Naive thymus-derived CD4-positive, alpha-beta T cell (primary cell): ENCODE measurements at regions of chr6 and their contacts with region 1.

Region 1: GRCh38 chr6:139291813-139292619 is at the start of gene TXLNB:
- DNase-seq: peak; percentile 32 to 94 (median 87)
- ATAC-seq: peak; percentile 92
- H3K4me3 ChIP-seq: peak within 1 kb of the TSS; percentile 42
- H3K4me3 Mint-ChIP-seq: peak within 1 kb of the TSS; percentile 80 to 92 (median 90)
- H3K27ac ChIP-seq: peak within 1 kb of the TSS; percentile 75
- H3K27ac Mint-ChIP-seq: peak within 1 kb of the TSS; percentile 93 to 99 (median 98)
- H3K4me1 ChIP-seq: peaks cover 33 to 39% of the 10 kb centered on the region in 2 donors
- H3K4me1 Mint-ChIP-seq: peaks cover 36 to 87% (median 81%) of the 10 kb centered on the region in 7 donors
- H3K27me3 ChIP-seq: no peaks in the 10 kb centered on the region
- H3K27me3 Mint-ChIP-seq: no peaks in the 10 kb centered on the region
- total RNA-seq, gene TXLNB: 0.29 to 1.1 (median 0.66) TPM

Region 2: GRCh38 chr6:138785079-138785478 is 506.9 kb before region 1 on chr6:
- CTCF ChIA-PET with region 1: no interaction called
- POLR2A ChIA-PET with region 1: no interaction called
- intact Hi-C with region 1: no loop called
- DNase-seq: no peak
- ATAC-seq: no peak
- H3K4me3 ChIP-seq: no peak overlapping the region
- H3K4me3 Mint-ChIP-seq: no peak overlapping the region
- H3K27ac ChIP-seq: no peak overlapping the region
- H3K27ac Mint-ChIP-seq: no peak overlapping the region
- H3K4me1 ChIP-seq: no peaks in the 10 kb centered on the region
- H3K4me1 Mint-ChIP-seq: peaks cover 5 to 12% (median 6%) of the 10 kb centered on the region in 7 donors
- H3K27me3 ChIP-seq: no peaks in the 10 kb centered on the region
- H3K27me3 Mint-ChIP-seq: no peaks in the 10 kb centered on the region

Region 3: DNA sequence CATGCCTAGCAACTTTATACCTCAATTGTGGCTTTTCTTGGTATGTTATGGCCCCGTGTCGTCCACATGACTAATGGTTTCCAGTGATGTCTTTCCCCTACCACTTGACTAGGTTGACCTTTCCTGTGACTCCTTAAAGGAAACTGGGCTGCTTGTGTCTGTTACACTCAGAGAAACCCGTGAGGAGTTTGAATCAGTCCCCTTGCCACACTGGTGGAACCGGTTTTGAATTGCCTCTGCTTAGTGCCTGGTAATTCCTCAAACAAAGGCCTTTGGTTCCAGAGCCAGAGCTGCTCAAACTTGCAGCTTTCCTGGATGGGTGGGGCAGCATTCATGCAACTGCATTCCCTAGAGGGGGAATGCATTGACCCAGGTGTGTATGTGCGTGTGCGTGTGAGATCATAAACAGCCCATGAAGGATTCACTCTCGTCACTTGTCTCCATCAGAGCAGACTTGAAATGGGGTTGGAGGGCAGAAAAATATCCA is 474.2 kb before region 1 on chr6:
- CTCF ChIA-PET with region 1: no interaction called
- POLR2A ChIA-PET with region 1: no interaction called
- intact Hi-C with region 1: loop called in 1 of 2 experiments (anchors 1 kb)
- DNase-seq: peak in 1 of 9 donors; percentile 28
- ATAC-seq: no peak
- H3K4me3 ChIP-seq: no peak overlapping the region
- H3K4me3 Mint-ChIP-seq: no peak overlapping the region
- H3K27ac ChIP-seq: no peak overlapping the region
- H3K27ac Mint-ChIP-seq: peak overlapping the region in 1 of 9 donors; percentile 21
- H3K4me1 ChIP-seq: no peaks in the 10 kb centered on the region
- H3K4me1 Mint-ChIP-seq: peaks cover 0 to 30% (median 0%) of the 10 kb centered on the region in 7 donors
- H3K27me3 ChIP-seq: no peaks in the 10 kb centered on the region
- H3K27me3 Mint-ChIP-seq: no peaks in the 10 kb centered on the region

Region 4: DNA sequence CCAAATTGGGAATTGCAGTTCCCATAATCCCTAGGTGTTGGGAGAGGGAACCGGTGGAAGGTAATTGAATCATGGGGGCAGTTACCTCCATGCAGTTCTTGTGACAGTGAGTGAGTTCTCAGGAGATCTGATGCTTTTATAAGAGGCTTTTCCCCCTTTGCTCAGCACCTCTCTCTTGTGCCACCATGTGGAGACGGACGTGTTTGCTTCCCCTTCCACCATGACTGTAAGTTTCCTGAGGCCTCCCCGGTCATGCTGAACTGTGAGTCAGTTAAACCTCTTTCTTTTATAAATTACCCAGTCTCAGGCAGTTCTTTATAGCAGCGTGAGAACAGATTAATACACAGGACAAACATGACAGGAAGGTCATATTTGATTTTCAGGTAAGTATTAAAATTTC is 182.5 kb before region 1 on chr6:
- CTCF ChIA-PET with region 1: no interaction called
- POLR2A ChIA-PET with region 1: interaction called, 4 read pairs
- intact Hi-C with region 1: loop called (anchors 5 kb)
- DNase-seq: peak in 2 of 9 donors; percentile 21 to 28
- ATAC-seq: no peak
- H3K4me3 ChIP-seq: no peak overlapping the region
- H3K4me3 Mint-ChIP-seq: peak overlapping the region in 2 of 10 donors; percentile 6 to 36
- H3K27ac ChIP-seq: no peak overlapping the region
- H3K27ac Mint-ChIP-seq: peak overlapping the region in 8 of 9 donors; percentile 38 to 94 (median 86)
- H3K4me1 ChIP-seq: peaks cover 36 to 48% of the 10 kb centered on the region in 2 donors
- H3K4me1 Mint-ChIP-seq: peaks cover 17 to 74% (median 59%) of the 10 kb centered on the region in 7 donors
- H3K27me3 ChIP-seq: no peaks in the 10 kb centered on the region
- H3K27me3 Mint-ChIP-seq: no peaks in the 10 kb centered on the region

Region 5: DNA sequence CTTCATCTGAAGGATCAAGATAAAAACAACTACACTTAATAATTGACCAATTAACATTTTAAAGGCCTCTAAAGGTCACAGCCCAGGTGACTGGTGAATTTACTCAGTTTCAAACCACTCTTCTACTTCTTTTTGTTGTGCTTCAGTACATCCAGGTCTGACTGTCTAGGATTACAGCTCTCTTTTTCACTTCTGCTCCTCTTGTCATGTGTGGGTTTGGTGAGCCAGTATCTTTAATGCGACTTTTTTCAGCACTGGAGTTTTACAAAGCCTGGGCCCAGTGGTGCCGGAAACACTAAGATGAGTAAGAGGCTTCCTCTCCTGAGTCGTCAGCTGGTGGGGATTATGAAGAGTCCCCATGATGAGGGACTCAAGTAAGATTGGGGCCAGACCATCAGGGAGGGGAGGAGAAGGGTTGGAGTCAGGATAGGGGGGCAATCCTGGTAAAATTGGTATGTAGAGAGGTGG is 130.2 kb before region 1 on chr6:
- CTCF ChIA-PET with region 1: no interaction called
- POLR2A ChIA-PET with region 1: interaction called, 16 read pairs
- intact Hi-C with region 1: loop called (anchors 1 kb)
- DNase-seq: peak in 8 of 9 donors; percentile 59 to 78 (median 73)
- ATAC-seq: peak; percentile 64
- H3K4me3 ChIP-seq: peak overlapping the region; percentile 11
- H3K4me3 Mint-ChIP-seq: peak overlapping the region; percentile 79 to 88 (median 83)
- H3K27ac ChIP-seq: peak overlapping the region; percentile 75
- H3K27ac Mint-ChIP-seq: peak overlapping the region; percentile 86 to 98 (median 91)
- H3K4me1 ChIP-seq: peaks cover 81 to 85% of the 10 kb centered on the region in 2 donors
- H3K4me1 Mint-ChIP-seq: peaks cover 70 to 96% (median 86%) of the 10 kb centered on the region in 7 donors
- H3K27me3 ChIP-seq: no peaks in the 10 kb centered on the region
- H3K27me3 Mint-ChIP-seq: no peaks in the 10 kb centered on the region

Region 6: DNA sequence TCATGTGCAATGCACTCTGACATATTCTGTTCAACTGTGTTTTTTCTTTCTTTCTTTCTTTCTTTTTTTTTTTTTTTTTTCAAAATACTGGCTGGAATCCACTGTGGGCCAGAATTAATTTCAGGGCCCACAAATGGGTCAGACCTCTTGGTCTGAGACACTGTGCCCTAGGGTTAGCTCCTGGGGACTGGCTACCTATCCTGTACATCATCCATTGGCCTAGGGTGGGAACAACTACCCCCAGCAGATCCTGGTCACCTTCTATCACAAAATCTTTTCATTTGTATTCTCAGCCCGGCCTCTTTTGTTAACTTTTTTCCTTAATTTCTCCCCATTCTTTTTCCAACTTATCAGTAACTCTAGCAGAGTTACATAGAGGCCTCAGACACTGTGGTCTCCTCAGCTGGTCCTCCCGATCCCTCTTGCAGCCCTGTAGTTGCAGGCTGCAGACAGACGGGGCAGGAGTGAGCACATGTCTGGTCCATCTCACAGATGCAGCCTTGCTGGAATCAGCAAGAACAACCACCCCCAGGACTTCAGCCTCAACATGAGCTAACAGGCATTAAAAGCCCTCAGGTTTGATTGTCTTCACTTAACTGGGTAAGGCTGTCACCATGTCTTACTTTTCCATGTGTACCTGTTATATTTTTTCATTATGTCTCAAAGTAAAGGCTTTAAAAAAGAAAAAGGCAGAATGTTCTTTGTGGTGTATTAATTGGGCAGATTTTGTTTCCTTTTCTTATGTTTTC is 41.5 kb before region 1 on chr6:
- CTCF ChIA-PET with region 1: interaction called, 3 read pairs
- POLR2A ChIA-PET with region 1: interaction called, 10 read pairs
- intact Hi-C with region 1: loop called (anchors 1 kb)
- DNase-seq: peak; percentile 7 to 45 (median 34)
- ATAC-seq: peak; percentile 90
- H3K4me3 ChIP-seq: no peak overlapping the region
- H3K4me3 Mint-ChIP-seq: peak overlapping the region in 6 of 10 donors; percentile 16 to 85 (median 58)
- H3K27ac ChIP-seq: no peak overlapping the region
- H3K27ac Mint-ChIP-seq: peak overlapping the region; percentile 32 to 97 (median 73)
- H3K4me1 ChIP-seq: peaks cover 21 to 23% of the 10 kb centered on the region in 2 donors
- H3K4me1 Mint-ChIP-seq: peaks cover 23 to 48% (median 46%) of the 10 kb centered on the region in 7 donors
- H3K27me3 ChIP-seq: no peaks in the 10 kb centered on the region
- H3K27me3 Mint-ChIP-seq: no peaks in the 10 kb centered on the region

Region 7: DNA sequence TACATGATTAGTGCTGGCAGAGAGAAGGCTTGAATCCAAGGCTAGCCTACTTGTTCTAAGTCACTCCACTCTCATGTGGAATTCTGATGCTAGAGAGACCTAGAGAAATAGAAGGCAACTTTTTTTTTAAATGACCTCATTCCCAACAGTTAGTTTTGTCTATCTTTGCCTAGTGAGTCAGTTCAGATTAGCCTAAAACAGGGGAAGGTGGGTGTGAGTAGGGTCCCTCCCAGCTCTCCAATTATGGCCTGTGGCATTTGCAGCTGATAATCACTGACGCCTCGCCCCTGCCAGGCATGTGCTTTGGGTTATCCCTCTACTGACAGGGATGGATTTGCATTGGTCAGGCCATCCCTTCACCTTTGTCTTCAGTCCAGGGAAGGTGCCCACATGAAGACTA is 13.8 kb before region 1 on chr6:
- CTCF ChIA-PET with region 1: interaction called, 3 read pairs
- POLR2A ChIA-PET with region 1: interaction called, 7 read pairs
- intact Hi-C with region 1: loop called (anchors 1 kb)
- DNase-seq: no peak
- ATAC-seq: no peak
- H3K4me3 ChIP-seq: no peak overlapping the region
- H3K4me3 Mint-ChIP-seq: no peak overlapping the region
- H3K27ac ChIP-seq: no peak overlapping the region
- H3K27ac Mint-ChIP-seq: peak overlapping the region in 6 of 9 donors; percentile 12 to 80 (median 58)
- H3K4me1 ChIP-seq: peaks cover 5 to 10% of the 10 kb centered on the region in 2 donors
- H3K4me1 Mint-ChIP-seq: peaks cover 11 to 53% (median 32%) of the 10 kb centered on the region in 7 donors
- H3K27me3 ChIP-seq: no peaks in the 10 kb centered on the region
- H3K27me3 Mint-ChIP-seq: no peaks in the 10 kb centered on the region

Region 8: GRCh38 chr6:139364302-139364981 is 72.4 kb after region 1 on chr6:
- CTCF ChIA-PET with region 1: interaction called, 31 read pairs
- POLR2A ChIA-PET with region 1: interaction called, 12 read pairs
- intact Hi-C with region 1: loop called (anchors 1 kb)
- DNase-seq: peak in 6 of 9 donors; percentile 50 to 74 (median 64)
- ATAC-seq: peak; percentile 81
- H3K4me3 ChIP-seq: no peak overlapping the region
- H3K4me3 Mint-ChIP-seq: peak overlapping the region in 2 of 10 donors; percentile 22 to 34
- H3K27ac ChIP-seq: no peak overlapping the region
- H3K27ac Mint-ChIP-seq: peak overlapping the region; percentile 16 to 88 (median 37)
- H3K4me1 ChIP-seq: peaks cover 0 to 18% of the 10 kb centered on the region in 2 donors
- H3K4me1 Mint-ChIP-seq: peaks cover 17 to 67% (median 53%) of the 10 kb centered on the region in 7 donors
- H3K27me3 ChIP-seq: no peaks in the 10 kb centered on the region
- H3K27me3 Mint-ChIP-seq: peaks cover 0 to 2% (median 0%) of the 10 kb centered on the region in 5 donors

Region 9: DNA sequence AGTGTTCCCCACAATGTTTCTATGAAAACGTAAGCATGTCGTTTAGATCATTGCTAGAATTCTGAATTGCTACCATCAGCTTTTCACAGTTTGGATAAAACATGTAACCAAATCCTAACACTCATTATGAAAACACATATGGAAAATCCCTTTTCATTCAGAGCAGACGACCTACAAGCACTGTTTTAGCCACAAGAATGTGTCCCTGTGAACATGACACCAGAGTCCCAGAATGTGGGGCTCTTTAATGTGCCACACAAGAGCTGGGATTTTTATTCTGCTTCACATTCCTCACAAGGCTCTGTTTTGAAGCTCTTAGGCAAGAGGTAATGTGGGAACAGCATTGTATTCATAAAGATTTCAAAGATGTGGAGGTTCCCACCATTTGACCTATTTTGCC is 223.5 kb after region 1 on chr6:
- CTCF ChIA-PET with region 1: no interaction called
- POLR2A ChIA-PET with region 1: no interaction called
- intact Hi-C with region 1: no loop called
- DNase-seq: no peak
- ATAC-seq: no peak
- H3K4me3 ChIP-seq: no peak overlapping the region
- H3K4me3 Mint-ChIP-seq: no peak overlapping the region
- H3K27ac ChIP-seq: no peak overlapping the region
- H3K27ac Mint-ChIP-seq: no peak overlapping the region
- H3K4me1 ChIP-seq: no peaks in the 10 kb centered on the region
- H3K4me1 Mint-ChIP-seq: no peaks in the 10 kb centered on the region
- H3K27me3 ChIP-seq: no peaks in the 10 kb centered on the region
- H3K27me3 Mint-ChIP-seq: peaks cover 0 to 13% (median 2%) of the 10 kb centered on the region in 5 donors

Region 10: DNA sequence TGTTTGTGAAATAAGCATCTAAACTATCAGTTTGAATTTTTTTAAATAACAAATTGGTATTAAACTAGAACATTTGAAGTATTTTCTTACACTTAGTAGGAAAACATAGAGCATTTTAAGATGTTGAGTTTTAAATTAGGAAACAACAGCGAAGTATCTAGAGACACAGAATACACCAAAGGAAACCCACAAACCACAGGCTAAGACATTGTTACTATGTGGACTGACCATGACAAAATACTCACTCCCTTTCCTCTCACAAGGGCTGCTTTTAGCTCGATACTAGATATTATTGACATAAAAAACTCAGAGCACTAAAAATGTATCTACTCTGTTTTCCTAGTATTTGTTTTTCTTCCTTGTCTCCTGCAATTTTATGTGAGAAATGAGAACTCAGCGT is 348.4 kb after region 1 on chr6:
- CTCF ChIA-PET with region 1: no interaction called
- POLR2A ChIA-PET with region 1: no interaction called
- intact Hi-C with region 1: no loop called
- DNase-seq: no peak
- ATAC-seq: peak; percentile 68
- H3K4me3 ChIP-seq: no peak overlapping the region
- H3K4me3 Mint-ChIP-seq: no peak overlapping the region
- H3K27ac ChIP-seq: no peak overlapping the region
- H3K27ac Mint-ChIP-seq: no peak overlapping the region
- H3K4me1 ChIP-seq: no peaks in the 10 kb centered on the region
- H3K4me1 Mint-ChIP-seq: peaks cover 0 to 11% (median 6%) of the 10 kb centered on the region in 7 donors
- H3K27me3 ChIP-seq: no peaks in the 10 kb centered on the region
- H3K27me3 Mint-ChIP-seq: peaks cover 18 to 43% (median 23%) of the 10 kb centered on the region in 5 donors